ENCODE measurements at regions of chr11 and their contacts with region 1.

Region 1: GRCh38 chr11:2151500-2152257 is 9.3 kb downstream of the INS start:
- H3K4me3 ChIP-seq: no peak overlapping the region
- H3K27ac ChIP-seq: no peak overlapping the region
- H3K4me1 ChIP-seq: no peaks in the 10 kb centered on the region
- CTCF ChIP-seq: peak; percentile 27

Region 2: GRCh38 chr11:1640076-1640946 is 511.4 kb before region 1 on chr11:
- CTCF ChIA-PET with region 1: interaction called, 26 read pairs
- POLR2A ChIA-PET with region 1: no interaction called
- H3K4me3 ChIP-seq: no peak overlapping the region
- H3K27ac ChIP-seq: no peak overlapping the region
- H3K4me1 ChIP-seq: no peaks in the 10 kb centered on the region
- CTCF ChIP-seq: peak; percentile 44

Region 3: GRCh38 chr11:1832211-1832919 is 319.3 kb before region 1 on chr11:
- CTCF ChIA-PET with region 1: interaction called, 69 read pairs
- POLR2A ChIA-PET with region 1: no interaction called
- H3K4me3 ChIP-seq: no peak overlapping the region
- H3K27ac ChIP-seq: no peak overlapping the region
- H3K4me1 ChIP-seq: no peaks in the 10 kb centered on the region
- CTCF ChIP-seq: peak; percentile 85

Region 4: GRCh38 chr11:1876361-1877063 is 275.2 kb before region 1 on chr11:
- CTCF ChIA-PET with region 1: interaction called, 119 read pairs
- POLR2A ChIA-PET with region 1: no interaction called
- H3K4me3 ChIP-seq: no peak overlapping the region
- H3K27ac ChIP-seq: no peak overlapping the region
- H3K4me1 ChIP-seq: no peaks in the 10 kb centered on the region
- CTCF ChIP-seq: peak; percentile 15; the same call in 1 of the 2 replicates

Region 5: GRCh38 chr11:1953489-1954266 is 198.0 kb before region 1 on chr11:
- CTCF ChIA-PET with region 1: interaction called, 57 read pairs
- POLR2A ChIA-PET with region 1: interaction called, 6 read pairs
- H3K4me3 ChIP-seq: no peak overlapping the region
- H3K27ac ChIP-seq: no peak overlapping the region
- H3K4me1 ChIP-seq: no peaks in the 10 kb centered on the region
- CTCF ChIP-seq: no peak

Region 6: GRCh38 chr11:2036863-2037486 is 114.7 kb before region 1 on chr11:
- CTCF ChIA-PET with region 1: interaction called, 428 read pairs
- POLR2A ChIA-PET with region 1: interaction called, 12 read pairs
- H3K4me3 ChIP-seq: no peak overlapping the region
- H3K27ac ChIP-seq: no peak overlapping the region
- H3K4me1 ChIP-seq: no peaks in the 10 kb centered on the region
- CTCF ChIP-seq: no peak

Region 7: GRCh38 chr11:2612884-2613571 is 461.3 kb after region 1 on chr11:
- CTCF ChIA-PET with region 1: no interaction called
- POLR2A ChIA-PET with region 1: no interaction called
- H3K4me3 ChIP-seq: no peak overlapping the region
- H3K27ac ChIP-seq: no peak overlapping the region
- H3K4me1 ChIP-seq: no peaks in the 10 kb centered on the region
- CTCF ChIP-seq: no peak

Region 8: GRCh38 chr11:3834664-3835461 is 1683.2 kb after region 1 on chr11:
- CTCF ChIA-PET with region 1: no interaction called
- POLR2A ChIA-PET with region 1: interaction called, 10 read pairs
- H3K4me3 ChIP-seq: no peak overlapping the region
- H3K27ac ChIP-seq: no peak overlapping the region
- H3K4me1 ChIP-seq: no peaks in the 10 kb centered on the region
- CTCF ChIP-seq: no peak